ENCODE measurements at regions of chr2 and their contacts with region 1.

Region 1: DNA sequence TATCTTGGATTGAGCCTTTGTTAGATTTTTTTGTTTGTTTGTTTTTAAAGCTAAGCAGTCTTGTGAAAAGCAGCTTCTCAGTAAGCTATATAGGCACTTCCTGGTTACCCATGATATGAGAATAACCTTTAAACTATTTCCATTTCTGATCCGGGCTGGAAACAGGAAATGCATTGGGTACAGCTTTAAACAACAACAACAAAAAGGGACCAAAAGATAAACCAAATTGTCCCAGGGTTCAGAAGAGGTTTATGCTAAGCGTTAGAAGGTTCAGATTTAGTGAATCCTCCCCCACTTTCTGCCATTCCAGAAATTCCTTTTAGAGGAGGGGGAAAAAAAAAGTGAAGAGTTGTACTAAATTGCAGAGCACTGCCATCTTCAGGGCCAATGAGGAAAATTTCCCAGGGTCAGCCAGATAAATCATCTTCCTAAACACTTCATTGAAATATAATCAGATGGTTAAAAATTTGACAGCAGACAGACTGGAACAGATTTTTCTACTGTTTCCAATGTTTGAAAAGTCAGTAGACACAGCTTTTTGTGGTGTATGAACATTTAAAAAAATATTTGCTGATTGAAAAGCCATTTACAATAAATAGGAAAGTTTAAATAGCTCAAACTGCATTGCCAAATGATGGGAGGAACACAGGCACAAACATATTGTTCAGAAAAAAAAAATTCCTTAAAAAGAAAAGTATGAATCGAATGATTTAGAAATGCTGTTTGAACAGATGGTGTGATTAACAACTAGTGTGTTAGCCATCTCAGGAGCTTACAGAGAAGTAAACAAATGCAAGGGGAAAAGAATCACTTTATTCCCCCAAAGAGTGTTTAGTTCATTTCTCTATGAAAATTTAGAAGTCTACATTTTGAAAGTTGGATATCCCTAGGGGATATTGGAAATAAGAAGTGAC is 189.9 kb upstream of the TANK start:
- DNase-seq: peak; percentile 43
- ATAC-seq: peak; percentile 68
- H3K4me3 ChIP-seq: no peak overlapping the region
- H3K27ac ChIP-seq: peak overlapping the region; percentile 44; the same call in 1 of the 2 replicates
- H3K4me1 ChIP-seq: peaks cover 4% of the 10 kb centered on the region
- H3K27me3 ChIP-seq: no peaks in the 10 kb centered on the region
- CTCF ChIP-seq: peak; percentile 78; the same call in 1 of the 2 replicates

Region 2: DNA sequence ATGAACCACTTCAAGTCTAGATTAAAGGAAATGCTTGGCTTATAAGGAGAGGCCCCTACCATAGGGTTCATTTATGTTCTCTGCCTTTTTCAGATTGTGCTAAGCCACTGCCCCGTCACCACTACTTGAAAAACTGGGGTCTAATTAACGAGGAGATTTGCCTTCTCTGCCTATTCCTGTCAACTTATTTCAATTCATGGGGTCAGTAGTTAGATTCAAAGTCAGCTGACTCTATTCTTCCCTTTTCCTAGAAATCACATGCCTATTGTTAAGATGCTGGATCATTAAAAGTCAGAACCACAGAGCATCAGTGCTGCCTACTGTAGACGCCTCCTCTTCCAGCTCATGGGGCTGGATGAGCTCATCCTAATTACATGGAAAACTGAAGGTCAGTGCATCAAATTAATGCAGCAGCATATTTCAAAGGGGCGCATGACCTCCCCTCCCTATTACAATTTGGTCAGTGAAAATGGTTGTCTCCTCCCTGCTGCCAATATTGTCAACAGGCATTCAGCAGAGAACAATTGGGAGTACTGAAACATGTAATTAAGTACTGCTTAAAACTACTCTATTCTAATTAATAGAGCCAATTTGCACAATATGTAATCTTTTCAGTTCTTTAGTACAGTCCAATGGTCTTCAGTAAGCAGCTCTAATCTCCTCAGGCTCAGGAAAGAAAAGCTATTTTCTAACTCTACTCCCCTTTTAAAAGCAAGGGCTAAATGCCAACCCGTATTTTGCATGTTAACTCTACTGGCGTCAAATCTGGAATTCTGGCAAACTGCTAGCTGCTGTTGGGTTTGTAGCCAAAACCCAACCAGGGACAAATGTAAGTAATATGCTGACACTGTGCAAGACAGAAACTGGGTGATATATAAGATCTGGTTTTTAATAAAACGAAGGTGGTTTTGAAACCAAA is 652.9 kb before region 1 on chr2:
- CTCF ChIA-PET with region 1: no interaction called
- POLR2A ChIA-PET with region 1: no interaction called
- in situ Hi-C with region 1: no loop called
- intact Hi-C with region 1: loop called (anchors 5 kb)
- DNase-seq: no peak
- ATAC-seq: no peak
- H3K4me3 ChIP-seq: no peak overlapping the region
- H3K27ac ChIP-seq: no peak overlapping the region
- H3K4me1 ChIP-seq: no peaks in the 10 kb centered on the region
- H3K27me3 ChIP-seq: no peaks in the 10 kb centered on the region
- CTCF ChIP-seq: no peak

Region 3: DNA sequence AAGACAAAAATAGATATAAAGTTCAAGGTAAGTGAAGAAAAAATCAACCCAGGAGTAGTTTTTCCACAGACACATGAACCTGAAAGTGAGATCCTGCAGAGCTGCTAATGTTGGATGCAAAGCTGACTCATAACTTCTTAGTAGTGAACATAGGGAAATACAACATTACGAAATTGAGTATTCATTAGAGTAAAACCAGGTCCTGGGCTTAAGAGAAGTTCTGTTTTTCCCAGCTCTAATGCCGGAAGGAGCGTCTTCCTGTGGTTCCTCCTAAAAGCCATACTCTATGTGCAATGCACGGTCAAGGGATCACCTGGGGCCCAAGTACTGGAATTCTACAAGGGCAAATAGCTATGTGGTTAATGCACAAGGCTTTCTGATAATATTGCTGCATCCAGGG is 618.4 kb before region 1 on chr2:
- CTCF ChIA-PET with region 1: no interaction called
- POLR2A ChIA-PET with region 1: interaction called, 14 read pairs
- in situ Hi-C with region 1: no loop called
- intact Hi-C with region 1: no loop called
- DNase-seq: no peak
- ATAC-seq: no peak
- H3K4me3 ChIP-seq: no peak overlapping the region
- H3K27ac ChIP-seq: no peak overlapping the region
- H3K4me1 ChIP-seq: no peaks in the 10 kb centered on the region
- H3K27me3 ChIP-seq: no peaks in the 10 kb centered on the region
- CTCF ChIP-seq: no peak

Region 4: DNA sequence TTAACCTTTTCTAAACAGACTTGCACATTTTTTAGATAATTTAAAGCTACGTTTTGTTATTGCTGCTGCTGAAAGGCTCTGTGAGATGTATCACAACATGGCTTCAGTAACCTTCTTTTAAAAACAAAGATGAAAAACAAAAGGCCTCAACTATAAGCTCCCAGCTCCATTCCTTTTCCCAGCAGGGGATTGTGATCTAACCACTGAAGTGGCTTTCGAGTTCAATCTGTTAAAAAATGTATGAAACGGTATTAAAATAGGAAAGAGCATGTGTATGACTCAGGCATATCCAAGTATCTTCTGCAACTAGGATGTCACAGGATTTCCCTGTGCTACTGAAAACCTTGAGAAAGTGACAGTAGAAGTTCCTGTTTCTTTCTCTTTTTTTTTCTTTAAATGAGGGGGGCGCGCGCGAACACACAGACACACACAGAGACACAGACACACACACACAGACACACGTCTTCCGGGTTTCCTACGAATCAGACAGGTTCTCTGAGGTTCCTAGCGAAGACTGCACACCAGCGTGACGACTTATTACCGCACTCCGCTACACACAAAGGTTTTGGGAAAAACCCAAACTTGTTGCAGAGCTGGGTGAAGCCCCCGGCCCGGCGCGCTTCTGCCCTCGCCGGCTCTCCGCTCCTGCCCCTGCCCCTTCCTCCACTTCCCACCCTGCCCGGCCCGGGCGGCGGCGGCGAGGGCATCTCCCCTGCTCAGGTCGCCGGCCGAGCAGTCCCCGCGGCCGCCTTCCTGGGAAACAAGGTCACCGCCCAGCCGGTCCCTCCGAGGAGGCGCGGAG is 563.5 kb before region 1 on chr2:
- CTCF ChIA-PET with region 1: no interaction called
- POLR2A ChIA-PET with region 1: no interaction called
- in situ Hi-C with region 1: no loop called
- intact Hi-C with region 1: loop called (anchors 10 kb)
- DNase-seq: no peak
- ATAC-seq: peak; percentile 53
- H3K4me3 ChIP-seq: peak overlapping the region; percentile 64 to 84
- H3K27ac ChIP-seq: peak overlapping the region; percentile 87
- H3K4me1 ChIP-seq: peaks cover 51% of the 10 kb centered on the region
- H3K27me3 ChIP-seq: no peaks in the 10 kb centered on the region
- CTCF ChIP-seq: no peak

Region 5: GRCh38 chr2:160493227-160494028 is 476.9 kb before region 1 on chr2 and contains the start of gene RBMS1:
- CTCF ChIA-PET with region 1: no interaction called
- POLR2A ChIA-PET with region 1: no interaction called
- in situ Hi-C with region 1: no loop called
- intact Hi-C with region 1: loop called (anchors 10 kb)
- DNase-seq: no peak
- ATAC-seq: peak; percentile 77
- H3K4me3 ChIP-seq: peak within 1 kb of the TSS; percentile 69 to 74
- H3K27ac ChIP-seq: peak within 1 kb of the TSS; percentile 77
- H3K4me1 ChIP-seq: peaks cover 12% of the 10 kb centered on the region
- H3K27me3 ChIP-seq: peaks cover 5% of the 10 kb centered on the region; the same call in 1 of the 2 replicates
- CTCF ChIP-seq: no peak
- total RNA-seq, gene RBMS1: 67.0 TPM